Ovary (tissue), 10 donors: ENCODE measurements at regions of chr4 and their contacts with region 1.

Region 1: DNA sequence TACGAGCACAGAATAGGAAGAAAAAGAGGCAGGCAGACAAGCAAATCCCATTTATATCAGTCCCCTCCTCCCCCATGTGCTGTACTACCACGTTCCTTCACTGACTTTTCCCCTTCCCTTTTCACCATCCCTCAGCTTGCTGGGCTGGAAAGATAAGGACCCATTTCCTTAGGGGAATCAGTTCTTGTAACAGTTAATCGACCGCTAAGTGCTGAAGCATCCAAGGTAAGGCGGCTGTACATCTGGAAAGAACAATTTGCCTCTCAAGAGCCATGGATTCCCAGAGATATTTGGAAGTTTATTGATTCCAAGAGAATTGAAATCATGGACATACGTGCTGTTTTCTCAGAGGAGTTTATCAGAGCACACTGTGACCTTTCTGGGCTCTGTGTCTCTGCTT is 1688.0 kb downstream of the STIM2 start:
- DNase-seq: no peak
- H3K4me3 ChIP-seq: no peak overlapping the region
- H3K27ac ChIP-seq: no peak overlapping the region
- H3K4me1 ChIP-seq: no peaks in the 10 kb centered on the region
- H3K27me3 ChIP-seq: no peaks in the 10 kb centered on the region
- CTCF ChIP-seq: no peak
- EP300 ChIP-seq: no peak
- POLR2A ChIP-seq: no peak

Region 2: GRCh38 chr4:27248829-27249228 is 1299.8 kb before region 1 on chr4:
- intact Hi-C with region 1: loop called in 1 of 4 experiments (anchors 10 kb)
- DNase-seq: no peak
- H3K4me3 ChIP-seq: no peak overlapping the region
- H3K27ac ChIP-seq: no peak overlapping the region
- H3K4me1 ChIP-seq: peaks cover 1% of the 10 kb centered on the region
- H3K27me3 ChIP-seq: no peaks in the 10 kb centered on the region
- CTCF ChIP-seq: no peak
- EP300 ChIP-seq: no peak
- POLR2A ChIP-seq: no peak

Region 3: DNA sequence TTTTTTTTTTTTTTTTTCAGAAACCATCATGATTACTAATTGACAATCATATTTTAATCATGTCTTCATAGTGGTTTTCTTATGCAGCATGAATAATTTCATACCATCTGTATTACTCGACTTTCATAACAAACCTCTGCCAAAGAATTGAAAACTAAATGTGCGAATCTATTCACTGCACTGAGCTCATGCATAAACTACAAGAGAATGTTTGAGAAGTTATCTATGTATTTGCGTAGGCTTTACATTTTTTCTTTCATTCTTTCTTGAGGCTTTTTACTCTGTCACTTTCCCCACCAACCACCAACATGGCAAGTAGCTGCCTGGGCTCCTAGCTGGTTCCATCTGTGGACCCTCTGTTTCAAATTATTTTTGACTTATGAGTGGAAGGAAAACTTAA is 73.0 kb after region 1 on chr4:
- intact Hi-C with region 1: no loop called
- DNase-seq: no peak
- H3K4me3 ChIP-seq: no peak overlapping the region
- H3K27ac ChIP-seq: no peak overlapping the region
- H3K4me1 ChIP-seq: no peaks in the 10 kb centered on the region
- H3K27me3 ChIP-seq: no peaks in the 10 kb centered on the region
- CTCF ChIP-seq: no peak
- EP300 ChIP-seq: no peak
- POLR2A ChIP-seq: no peak